ENCODE measurements at regions of chr21 and their contacts with region 1.

Region 1: DNA sequence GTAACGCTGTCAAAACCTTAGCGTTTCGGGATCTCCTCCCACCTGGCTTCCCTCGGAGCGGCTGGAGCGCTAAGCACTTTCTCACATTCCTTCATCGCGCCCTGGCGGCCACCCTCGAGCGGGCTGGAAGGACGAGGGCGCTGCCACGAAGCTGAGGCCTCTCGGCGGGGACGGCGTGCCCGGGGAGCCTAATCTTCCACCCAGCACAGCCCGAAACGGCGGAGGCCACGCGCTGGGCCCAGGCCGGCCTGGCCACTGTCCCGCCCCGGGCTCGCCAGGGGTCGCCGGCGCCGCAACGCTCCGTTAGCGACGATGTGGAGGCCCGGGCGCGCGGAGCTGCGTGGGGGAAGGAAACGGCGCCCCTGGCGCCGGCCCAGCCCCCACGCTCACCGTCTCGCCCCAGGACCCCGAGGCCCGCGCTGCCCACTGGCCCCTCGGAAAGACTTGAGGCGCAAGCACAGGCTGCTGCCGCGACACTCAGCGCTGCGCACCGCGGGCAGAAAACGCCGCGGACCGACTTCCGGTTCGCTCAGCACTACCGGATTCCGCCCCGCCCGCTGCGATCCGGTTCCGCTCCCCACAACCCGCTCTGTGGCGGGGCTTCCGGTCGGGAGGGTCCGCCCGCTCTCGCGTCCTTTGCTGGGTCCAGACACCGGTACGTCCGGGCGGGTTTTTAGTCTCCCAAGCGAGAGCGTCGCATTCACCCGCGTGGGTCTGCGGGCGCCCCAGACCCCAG is at the start of gene YBEY:
- DNase-seq: peak; percentile 85
- H3K4me3 Mint-ChIP-seq: peak within 1 kb of the TSS; percentile 98
- H3K27ac Mint-ChIP-seq: peak within 1 kb of the TSS; percentile 99
- H3K4me1 Mint-ChIP-seq: peaks cover 42% of the 10 kb centered on the region
- H3K27me3 Mint-ChIP-seq: no peaks in the 10 kb centered on the region
- total RNA-seq, gene YBEY: 14.4 and 15.3 TPM in 2 replicates

Region 2: GRCh38 chr21:46295996-46296752 is 10.2 kb after region 1 on chr21:
- intact Hi-C with region 1: loop called (anchors 1 kb)
- DNase-seq: peak; percentile 64
- H3K4me3 Mint-ChIP-seq: peak overlapping the region; percentile 37
- H3K27ac Mint-ChIP-seq: peak overlapping the region; percentile 76
- H3K4me1 Mint-ChIP-seq: peaks cover 8% of the 10 kb centered on the region
- H3K27me3 Mint-ChIP-seq: no peaks in the 10 kb centered on the region

Region 3: DNA sequence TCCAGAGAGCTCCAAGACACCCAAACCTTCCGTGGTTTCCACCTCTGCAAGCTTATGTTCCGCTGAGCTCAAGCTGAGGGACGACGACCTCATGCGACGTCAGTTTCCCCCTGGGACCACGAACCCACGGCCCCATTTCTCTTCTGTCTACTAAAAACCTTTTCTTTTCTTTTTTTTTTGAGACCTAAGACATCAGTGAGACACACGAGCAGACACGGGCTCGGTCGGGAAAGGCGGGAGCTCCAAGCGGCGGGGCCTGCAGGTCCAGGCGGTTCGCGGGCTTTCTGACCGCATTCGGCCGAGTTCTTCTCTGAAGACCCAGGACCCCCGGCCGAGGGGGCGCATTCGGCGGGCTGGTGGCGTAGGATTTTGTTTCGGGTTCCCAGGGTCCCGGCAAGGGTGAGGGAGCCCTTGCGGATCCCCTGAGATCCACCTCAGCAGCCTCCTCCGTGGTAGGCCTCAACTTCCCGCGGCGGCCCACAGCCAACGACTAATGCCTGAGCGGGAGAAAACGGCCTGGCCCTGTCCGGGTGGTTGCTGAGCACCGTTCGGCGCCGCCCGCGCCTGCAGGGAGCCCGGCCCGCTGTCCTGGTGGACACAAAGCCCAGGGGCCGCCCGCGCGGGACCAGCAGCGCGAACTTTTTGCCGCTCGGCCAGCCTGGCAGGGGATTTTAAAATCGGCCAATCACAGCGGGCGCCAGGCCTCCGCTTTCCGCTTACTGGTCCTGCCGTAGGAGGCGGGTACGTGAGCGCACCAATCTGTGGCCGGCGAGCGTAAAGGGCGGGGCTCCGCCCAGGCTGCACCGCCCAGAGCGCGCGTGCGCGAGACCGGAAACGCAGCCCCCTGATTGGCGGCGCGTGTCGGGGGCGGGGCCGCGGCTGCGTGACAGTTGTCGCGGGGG is 37.5 kb after region 1 on chr21 and contains the start of gene C21orf58:
- intact Hi-C with region 1: loop called (anchors 1 kb)
- DNase-seq: peak; percentile 98
- H3K4me3 Mint-ChIP-seq: peak within 1 kb of the TSS; percentile 97
- H3K27ac Mint-ChIP-seq: peak within 1 kb of the TSS; percentile 99
- H3K4me1 Mint-ChIP-seq: peaks cover 30% of the 10 kb centered on the region
- H3K27me3 Mint-ChIP-seq: no peaks in the 10 kb centered on the region
- total RNA-seq, gene C21orf58: 32.2 and 32.8 TPM in 2 replicates

Measured in activated T-helper 2 cell treated with anti-CD3 and anti-CD28 coated beads, Interferon-gamma antibody, Interleukin-2, Interleukin-4, amounts not matched to agents 10 μg/mL and 5 μg/mL and 100 μg/mL, durations not matched to agents 14 hours and 24 hours and 36 hours (primary cell).